ENCODE measurements at regions of chr4 and their contacts with region 1.

Region 1: DNA sequence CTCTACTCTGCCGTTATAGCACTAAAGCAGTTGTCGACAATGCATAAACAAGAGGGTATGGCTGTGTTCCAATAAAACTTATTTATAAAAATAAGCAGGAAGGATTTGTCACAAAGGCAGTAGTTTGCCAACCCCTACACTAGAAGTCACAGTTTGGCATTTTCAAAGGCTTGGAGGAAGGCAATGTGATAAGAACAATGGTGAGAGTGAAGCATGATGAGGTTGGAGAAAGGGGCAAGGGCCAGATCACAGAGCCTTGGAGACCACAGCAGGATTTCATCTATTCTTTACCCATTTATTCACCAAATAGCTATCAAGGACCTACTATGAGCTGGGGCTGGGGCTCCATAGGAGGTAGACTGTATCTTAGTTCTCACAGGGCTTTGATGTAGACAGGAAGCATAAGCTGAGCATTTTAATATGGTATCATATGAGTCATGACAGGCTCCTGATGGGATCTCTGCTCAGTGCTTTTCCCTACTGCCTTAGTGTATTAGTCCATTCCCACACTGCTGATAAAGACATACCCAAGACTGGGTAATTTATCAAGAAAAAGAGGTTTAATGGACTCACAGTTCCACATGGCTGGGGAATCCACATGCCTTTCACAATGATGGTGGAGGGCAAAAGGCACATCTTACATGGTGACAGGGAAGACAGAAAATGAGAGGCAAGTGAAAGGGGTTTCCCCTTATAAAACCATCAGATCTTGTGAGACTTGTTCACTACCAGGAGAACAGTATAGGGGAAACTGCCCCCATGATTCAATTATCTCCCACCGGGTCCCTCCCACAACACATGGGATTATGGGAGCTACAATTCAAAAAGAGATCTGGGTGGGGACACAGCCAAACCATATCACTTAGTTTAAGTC is 58.9 kb downstream of the PPM1K start:
- DNase-seq: no peak
- ATAC-seq: no peak
- H3K4me3 ChIP-seq: no peak overlapping the region
- H3K27ac ChIP-seq: no peak overlapping the region
- H3K4me1 ChIP-seq: peaks cover under 1% of the 10 kb centered on the region
- H3K27me3 ChIP-seq: no peaks in the 10 kb centered on the region
- CTCF ChIP-seq: no peak

Region 2: GRCh38 chr4:88366460-88366859 is 141.0 kb after region 1 on chr4:
- intact Hi-C with region 1: loop called (anchors 10 kb)
- DNase-seq: no peak
- ATAC-seq: no peak
- H3K4me3 ChIP-seq: no peak overlapping the region
- H3K27ac ChIP-seq: no peak overlapping the region
- H3K4me1 ChIP-seq: no peaks in the 10 kb centered on the region
- H3K27me3 ChIP-seq: no peaks in the 10 kb centered on the region
- CTCF ChIP-seq: no peak

Region 3: GRCh38 chr4:88514557-88515511 is 289.4 kb after region 1 on chr4:
- intact Hi-C with region 1: loop called (anchors 5 kb)
- DNase-seq: no peak
- ATAC-seq: peak; percentile 94
- H3K4me3 ChIP-seq: no peak overlapping the region
- H3K27ac ChIP-seq: no peak overlapping the region
- H3K4me1 ChIP-seq: peaks cover 4% of the 10 kb centered on the region
- H3K27me3 ChIP-seq: no peaks in the 10 kb centered on the region
- CTCF ChIP-seq: no peak